Activated CD4-positive, alpha-beta T cell treated with anti-CD3 and anti-CD28 coated beads for 36 hours (primary cell): ENCODE measurements at regions of chr3 and their contacts with region 1.

Region 1: DNA sequence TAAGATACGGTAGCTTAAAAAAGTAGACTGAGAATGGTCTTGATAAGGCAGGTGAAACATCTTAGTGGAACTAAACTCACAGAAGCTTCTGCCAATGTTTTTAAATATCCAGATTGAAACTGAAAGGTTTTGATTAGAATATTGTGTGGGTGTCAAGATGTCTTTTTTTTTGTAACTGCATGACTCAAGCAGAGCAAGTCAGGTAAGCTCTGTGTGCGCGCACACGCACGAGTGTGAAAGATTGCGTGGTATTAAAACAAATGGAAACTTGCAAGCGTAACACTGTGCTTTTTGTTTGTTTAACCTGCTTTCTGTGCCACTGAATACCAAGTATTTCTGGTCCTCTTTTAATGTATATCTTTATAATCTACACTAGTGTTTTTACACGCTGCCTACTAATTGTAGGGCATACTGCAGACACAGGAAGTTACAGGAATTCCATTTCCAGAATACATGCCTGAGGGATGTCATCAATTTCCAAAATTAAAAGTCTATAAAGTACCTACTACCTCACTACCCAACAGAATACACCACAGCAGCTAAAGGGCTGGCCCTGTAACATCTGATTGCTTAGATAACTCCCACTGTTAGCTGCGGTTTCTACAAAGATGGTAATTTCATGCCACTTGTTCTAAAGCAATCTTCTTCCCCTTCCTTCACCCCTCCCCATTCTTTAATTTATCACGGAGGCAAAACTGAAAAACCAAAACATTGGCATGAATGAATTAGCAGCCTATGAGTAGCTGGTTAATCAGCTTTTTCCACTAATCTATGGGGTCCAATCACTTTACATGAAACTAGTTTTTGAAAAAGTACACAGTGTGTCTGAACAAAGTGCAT is 472.8 kb downstream of the SHQ1 start:
- DNase-seq: peak; percentile 75
- ATAC-seq: peak; percentile 83
- H3K4me3 Mint-ChIP-seq: peak overlapping the region; percentile 36
- H3K27ac Mint-ChIP-seq: peak overlapping the region; percentile 88
- H3K4me1 Mint-ChIP-seq: peaks cover 68% of the 10 kb centered on the region
- H3K27me3 Mint-ChIP-seq: no peaks in the 10 kb centered on the region

Region 2: GRCh38 chr3:71380096-71380495 is 995.4 kb before region 1 on chr3:
- CTCF ChIA-PET with region 1: no interaction called
- POLR2A ChIA-PET with region 1: no interaction called
- intact Hi-C with region 1: no loop called
- DNase-seq: no peak
- ATAC-seq: no peak
- H3K4me3 Mint-ChIP-seq: no peak overlapping the region
- H3K27ac Mint-ChIP-seq: peak overlapping the region; percentile 7
- H3K4me1 Mint-ChIP-seq: peaks cover 91% of the 10 kb centered on the region
- H3K27me3 Mint-ChIP-seq: no peaks in the 10 kb centered on the region

Region 3: GRCh38 chr3:71875461-71875947 is 500.0 kb before region 1 on chr3:
- CTCF ChIA-PET with region 1: interaction called, 11 read pairs
- POLR2A ChIA-PET with region 1: interaction called, 3 read pairs
- intact Hi-C with region 1: loop called in 1 of 2 experiments (anchors 5 kb)
- DNase-seq: peak; percentile 90
- ATAC-seq: peak; percentile 90
- H3K4me3 Mint-ChIP-seq: no peak overlapping the region
- H3K27ac Mint-ChIP-seq: peak overlapping the region; percentile 89
- H3K4me1 Mint-ChIP-seq: peaks cover 35% of the 10 kb centered on the region
- H3K27me3 Mint-ChIP-seq: peaks cover 6% of the 10 kb centered on the region

Region 4: GRCh38 chr3:72134989-72135451 is 240.4 kb before region 1 on chr3:
- CTCF ChIA-PET with region 1: no interaction called
- POLR2A ChIA-PET with region 1: no interaction called
- intact Hi-C with region 1: loop called in 1 of 2 experiments (anchors 1 kb)
- DNase-seq: peak; percentile 16
- ATAC-seq: peak; percentile 62
- H3K4me3 Mint-ChIP-seq: peak overlapping the region; percentile 54
- H3K27ac Mint-ChIP-seq: peak overlapping the region; percentile 85
- H3K4me1 Mint-ChIP-seq: peaks cover 48% of the 10 kb centered on the region
- H3K27me3 Mint-ChIP-seq: peaks cover 2% of the 10 kb centered on the region

Region 5: DNA sequence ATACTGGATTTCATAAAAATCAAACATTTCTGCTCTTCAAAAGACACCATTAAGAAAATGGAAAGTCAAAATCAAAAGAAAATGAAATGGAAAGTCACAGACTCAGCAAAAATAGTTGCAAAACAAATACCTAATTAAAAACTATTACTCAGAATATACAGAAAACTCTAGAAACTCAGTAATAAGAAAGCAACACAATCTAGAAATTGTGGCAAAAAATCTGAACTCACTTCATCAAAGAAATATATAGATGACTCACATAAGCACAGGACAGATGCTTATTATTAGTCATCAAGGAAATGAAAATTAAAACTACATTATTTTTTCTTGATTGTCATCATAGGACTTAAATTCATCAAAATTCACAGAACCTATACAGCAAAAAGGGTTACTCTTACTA is 42.8 kb after region 1 on chr3:
- CTCF ChIA-PET with region 1: interaction called, 4 read pairs
- POLR2A ChIA-PET with region 1: interaction called, 4 read pairs
- intact Hi-C with region 1: loop called in 1 of 2 experiments (anchors 1 kb)
- DNase-seq: no peak
- ATAC-seq: peak; percentile 73
- H3K4me3 Mint-ChIP-seq: no peak overlapping the region
- H3K27ac Mint-ChIP-seq: no peak overlapping the region
- H3K4me1 Mint-ChIP-seq: peaks cover 72% of the 10 kb centered on the region
- H3K27me3 Mint-ChIP-seq: no peaks in the 10 kb centered on the region

Region 6: DNA sequence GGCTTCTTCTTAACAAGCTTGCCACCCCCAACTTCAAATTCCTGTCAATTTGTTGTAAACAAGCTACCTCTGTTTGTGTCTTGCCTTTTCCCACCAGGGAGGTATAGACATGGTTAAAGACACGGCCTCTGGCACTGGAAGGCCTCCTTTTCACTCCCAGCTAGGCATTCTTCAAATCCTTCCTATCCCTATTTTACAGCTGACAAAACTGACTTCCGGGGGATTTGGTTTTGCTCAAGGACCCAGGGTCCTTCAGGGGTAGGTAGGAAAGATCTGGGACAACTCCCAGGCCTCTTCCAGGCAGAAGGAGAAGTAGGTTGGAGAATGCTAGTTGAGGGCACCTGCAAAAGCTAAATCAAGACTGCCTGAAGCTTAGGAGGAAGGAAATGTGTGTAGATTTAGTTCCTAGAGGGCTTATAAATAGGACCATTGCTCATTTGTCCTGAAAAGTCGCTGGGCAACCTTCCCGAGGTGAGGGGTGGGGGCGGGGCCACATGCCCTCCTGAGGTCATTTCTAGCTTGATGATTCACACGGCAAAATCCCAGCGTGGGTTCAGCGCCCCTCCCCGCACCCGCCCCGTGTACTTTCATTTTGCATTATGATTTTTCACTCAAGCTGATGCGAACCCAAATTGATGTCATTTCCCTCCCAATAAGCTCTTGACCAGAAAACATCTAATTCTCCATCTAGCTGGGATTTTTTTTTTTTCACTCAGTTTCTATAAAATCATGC is 107.3 kb after region 1 on chr3:
- CTCF ChIA-PET with region 1: interaction called, 4 read pairs
- POLR2A ChIA-PET with region 1: interaction called, 3 read pairs
- intact Hi-C with region 1: loop called in 1 of 2 experiments (anchors 1 kb)
- DNase-seq: peak; percentile 94
- ATAC-seq: peak; percentile 46
- H3K4me3 Mint-ChIP-seq: peak overlapping the region; percentile 51
- H3K27ac Mint-ChIP-seq: peak overlapping the region; percentile 90
- H3K4me1 Mint-ChIP-seq: peaks cover 73% of the 10 kb centered on the region
- H3K27me3 Mint-ChIP-seq: no peaks in the 10 kb centered on the region

Region 7: GRCh38 chr3:72629191-72629631 is 253.8 kb after region 1 on chr3:
- CTCF ChIA-PET with region 1: no interaction called
- POLR2A ChIA-PET with region 1: no interaction called
- intact Hi-C with region 1: loop called (anchors 1 to 2 kb)
- DNase-seq: no peak
- ATAC-seq: peak; percentile 67
- H3K4me3 Mint-ChIP-seq: no peak overlapping the region
- H3K27ac Mint-ChIP-seq: peak overlapping the region; percentile 79
- H3K4me1 Mint-ChIP-seq: peaks cover 60% of the 10 kb centered on the region
- H3K27me3 Mint-ChIP-seq: no peaks in the 10 kb centered on the region